AG04449 (cell line): ENCODE measurements at regions of chr11 and their contacts with region 1.

Region 1: DNA sequence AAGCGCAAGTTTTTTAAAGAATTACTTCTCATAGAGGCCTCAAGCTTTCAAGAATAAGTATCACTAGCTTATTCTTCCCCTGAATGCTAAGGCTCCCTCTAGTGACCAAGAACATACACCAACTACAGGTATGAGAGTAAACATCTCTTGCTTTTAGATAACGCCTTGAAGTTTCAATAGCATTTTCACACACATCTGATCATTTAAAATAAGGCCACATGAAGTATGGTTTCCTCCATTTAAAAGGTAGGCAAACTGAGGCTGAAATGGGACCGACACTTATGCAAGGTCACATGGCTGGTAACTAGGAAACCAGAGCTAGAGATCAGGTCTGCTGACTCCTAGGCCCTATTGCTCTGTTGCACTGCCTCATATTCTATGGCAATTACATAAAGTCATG is 66.5 kb downstream of the CCDC34 start:
- DNase-seq: no peak
- H3K4me3 ChIP-seq: no peak overlapping the region
- CTCF ChIP-seq: peak; percentile 62

Region 2: GRCh38 chr11:27183672-27184457 is 112.6 kb before region 1 on chr11:
- CTCF ChIA-PET with region 1: interaction called, 154 read pairs
- POLR2A ChIA-PET with region 1: no interaction called
- DNase-seq: peak; percentile 38
- H3K4me3 ChIP-seq: no peak overlapping the region
- CTCF ChIP-seq: peak; percentile 47

Region 3: GRCh38 chr11:27201454-27202236 is 94.9 kb before region 1 on chr11:
- CTCF ChIA-PET with region 1: interaction called, 30 read pairs
- POLR2A ChIA-PET with region 1: no interaction called
- DNase-seq: no peak
- H3K4me3 ChIP-seq: no peak overlapping the region
- CTCF ChIP-seq: no peak

Region 4: DNA sequence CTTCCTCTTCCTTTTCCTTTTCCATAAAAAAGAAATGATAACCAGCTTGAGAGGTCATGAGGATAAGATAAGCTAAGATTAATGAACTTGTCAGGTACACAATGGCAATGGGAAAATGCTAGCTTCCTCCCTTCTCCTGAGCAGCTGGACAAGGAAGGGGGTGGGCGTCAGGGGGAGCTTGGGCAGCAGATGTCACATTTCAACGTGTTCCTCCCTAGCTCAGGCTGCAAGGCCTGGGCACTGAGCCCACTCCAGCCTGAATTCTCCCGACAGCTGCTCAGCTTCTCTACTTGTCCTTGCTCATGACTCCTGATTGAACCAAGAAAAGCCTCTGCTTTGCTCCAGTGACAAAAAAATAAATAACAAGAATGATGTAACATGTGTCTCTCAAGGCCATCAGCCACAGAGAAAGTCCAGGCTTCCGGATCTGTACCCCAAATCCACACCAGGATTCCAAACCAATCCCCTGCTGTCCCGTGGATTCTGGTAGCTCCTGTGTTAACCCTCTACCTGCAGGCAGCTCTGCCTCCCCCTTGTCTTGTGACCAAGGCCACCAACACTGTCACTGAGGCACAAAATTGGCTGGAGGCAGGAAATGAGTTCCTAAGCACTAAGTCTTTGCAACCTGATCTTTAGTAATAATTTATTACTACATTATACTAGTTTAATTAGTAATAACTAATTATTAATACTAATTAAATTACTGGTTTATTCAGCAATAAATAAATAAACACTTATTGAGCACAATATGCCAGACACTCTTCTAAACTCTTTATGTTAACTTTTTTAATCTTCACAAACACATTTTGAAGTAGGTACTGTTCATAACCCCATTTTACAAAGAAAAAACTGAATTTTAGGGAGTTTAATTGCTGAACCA is 80.0 kb before region 1 on chr11:
- CTCF ChIA-PET with region 1: interaction called, 14 read pairs
- POLR2A ChIA-PET with region 1: no interaction called
- DNase-seq: no peak
- H3K4me3 ChIP-seq: no peak overlapping the region
- CTCF ChIP-seq: no peak

Region 5: DNA sequence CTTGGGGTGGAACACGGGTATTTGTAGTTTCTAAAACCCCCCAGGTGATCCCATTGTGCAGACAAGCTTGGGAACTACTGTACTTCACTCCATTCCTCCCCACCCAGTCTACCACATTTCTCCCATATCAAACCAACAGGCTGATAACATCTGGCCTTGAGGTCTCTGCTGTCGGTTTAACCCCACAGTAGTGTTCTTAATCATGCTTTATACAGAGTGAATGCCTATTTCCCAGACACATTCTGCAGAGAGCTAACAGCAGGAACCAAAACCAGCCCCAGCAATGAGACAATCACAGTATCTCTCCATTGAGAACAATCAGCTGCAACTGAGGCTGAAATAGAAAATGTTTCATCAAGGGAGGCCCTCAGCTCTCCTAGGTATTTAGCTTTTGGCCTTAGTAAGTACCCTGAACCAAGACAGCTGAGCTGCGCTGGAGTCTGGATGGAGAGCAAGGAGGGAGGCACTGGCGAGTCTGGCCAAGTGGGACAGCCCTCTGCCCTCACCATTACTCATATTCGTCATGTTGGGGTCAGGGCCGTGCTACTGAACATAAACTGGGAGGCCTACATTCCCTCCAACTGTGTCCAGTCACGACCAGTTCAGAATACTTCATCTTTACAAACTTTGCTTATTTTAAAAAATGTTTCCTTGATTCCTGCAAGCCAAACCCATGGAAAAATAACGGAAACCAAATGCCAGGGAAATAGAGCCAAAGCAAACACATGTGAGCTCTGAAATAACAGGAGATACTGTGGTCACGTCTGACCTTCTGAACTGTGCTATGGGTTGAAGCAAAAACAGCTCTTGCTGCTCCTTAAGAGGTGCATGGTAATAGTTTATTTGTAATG is 14.5 kb before region 1 on chr11:
- CTCF ChIA-PET with region 1: interaction called, 98 read pairs
- POLR2A ChIA-PET with region 1: interaction called, 4 read pairs
- DNase-seq: peak; percentile 93
- H3K4me3 ChIP-seq: no peak overlapping the region
- CTCF ChIP-seq: no peak

Region 6: GRCh38 chr11:27416193-27417187 is 120.0 kb after region 1 on chr11:
- CTCF ChIA-PET with region 1: no interaction called
- POLR2A ChIA-PET with region 1: no interaction called
- DNase-seq: no peak
- H3K4me3 ChIP-seq: no peak overlapping the region
- CTCF ChIP-seq: no peak

Region 7: GRCh38 chr11:27497284-27497866 is 200.9 kb after region 1 on chr11:
- CTCF ChIA-PET with region 1: interaction called, 12 read pairs
- POLR2A ChIA-PET with region 1: no interaction called
- DNase-seq: no peak
- H3K4me3 ChIP-seq: no peak overlapping the region
- CTCF ChIP-seq: no peak